ENCODE measurements at regions of chr18 and their contacts with region 1.

Region 1: GRCh38 chr18:63320046-63320689 is 599 bp upstream of the BCL2 start:
- DNase-seq: peak; percentile 92
- ATAC-seq: peak; percentile 77
- H3K4me3 Mint-ChIP-seq: peak overlapping the region; percentile 93
- H3K27ac Mint-ChIP-seq: peak overlapping the region; percentile 94
- H3K4me1 Mint-ChIP-seq: peaks cover 22% of the 10 kb centered on the region
- H3K27me3 Mint-ChIP-seq: no peaks in the 10 kb centered on the region
- CTCF ChIP-seq: no peak

Region 2: GRCh38 chr18:63119647-63120046 is 200.5 kb before region 1 on chr18:
- CTCF ChIA-PET with region 1: interaction called, 20 read pairs
- POLR2A ChIA-PET with region 1: no interaction called
- intact Hi-C with region 1: no loop called
- DNase-seq: peak; percentile 53
- ATAC-seq: peak; percentile 67
- H3K4me3 Mint-ChIP-seq: no peak overlapping the region
- H3K27ac Mint-ChIP-seq: no peak overlapping the region
- H3K4me1 Mint-ChIP-seq: peaks cover 5% of the 10 kb centered on the region
- H3K27me3 Mint-ChIP-seq: peaks cover 10% of the 10 kb centered on the region
- CTCF ChIP-seq: peak; percentile 23

Region 3: DNA sequence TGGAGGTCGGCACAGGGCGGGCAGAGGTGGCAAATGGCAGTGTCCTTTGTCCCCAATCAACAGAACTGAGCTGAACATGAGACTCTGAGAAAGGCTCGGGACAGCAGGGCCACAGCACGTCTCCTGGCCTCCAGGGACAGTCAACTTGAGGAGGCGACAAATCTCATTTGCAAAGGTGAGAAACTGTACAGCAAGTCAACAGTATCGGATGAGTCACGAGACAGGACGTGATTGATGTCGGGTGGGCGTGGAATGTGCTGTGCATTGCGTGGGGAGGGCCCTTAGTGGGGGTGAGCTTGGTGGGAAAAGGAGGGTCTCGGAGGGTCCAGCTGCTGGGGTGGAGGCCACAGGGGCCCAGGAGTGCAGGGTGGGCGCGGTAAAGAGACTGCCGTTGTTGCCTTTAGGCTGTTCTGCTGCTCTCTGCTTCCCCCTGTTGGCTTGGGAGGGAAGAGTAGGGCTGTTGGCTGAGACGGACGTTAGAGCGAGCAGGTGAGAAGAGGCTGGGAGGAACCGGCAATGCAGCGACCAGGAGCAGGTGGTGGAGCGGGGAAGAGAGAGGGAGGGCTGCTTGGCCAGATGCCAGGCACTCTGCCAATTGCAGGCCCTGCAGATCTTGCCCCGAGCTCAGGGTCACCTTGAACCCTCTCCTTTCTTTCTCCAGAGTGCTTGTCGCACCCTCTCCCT is 164.9 kb before region 1 on chr18:
- CTCF ChIA-PET with region 1: interaction called, 36 read pairs
- POLR2A ChIA-PET with region 1: interaction called, 68 read pairs
- intact Hi-C with region 1: loop called (anchors 2 kb)
- DNase-seq: peak; percentile 92
- ATAC-seq: peak; percentile 62
- H3K4me3 Mint-ChIP-seq: peak overlapping the region; percentile 85
- H3K27ac Mint-ChIP-seq: peak overlapping the region; percentile 99
- H3K4me1 Mint-ChIP-seq: peaks cover 97% of the 10 kb centered on the region
- H3K27me3 Mint-ChIP-seq: no peaks in the 10 kb centered on the region
- CTCF ChIP-seq: peak; percentile 91

Region 4: DNA sequence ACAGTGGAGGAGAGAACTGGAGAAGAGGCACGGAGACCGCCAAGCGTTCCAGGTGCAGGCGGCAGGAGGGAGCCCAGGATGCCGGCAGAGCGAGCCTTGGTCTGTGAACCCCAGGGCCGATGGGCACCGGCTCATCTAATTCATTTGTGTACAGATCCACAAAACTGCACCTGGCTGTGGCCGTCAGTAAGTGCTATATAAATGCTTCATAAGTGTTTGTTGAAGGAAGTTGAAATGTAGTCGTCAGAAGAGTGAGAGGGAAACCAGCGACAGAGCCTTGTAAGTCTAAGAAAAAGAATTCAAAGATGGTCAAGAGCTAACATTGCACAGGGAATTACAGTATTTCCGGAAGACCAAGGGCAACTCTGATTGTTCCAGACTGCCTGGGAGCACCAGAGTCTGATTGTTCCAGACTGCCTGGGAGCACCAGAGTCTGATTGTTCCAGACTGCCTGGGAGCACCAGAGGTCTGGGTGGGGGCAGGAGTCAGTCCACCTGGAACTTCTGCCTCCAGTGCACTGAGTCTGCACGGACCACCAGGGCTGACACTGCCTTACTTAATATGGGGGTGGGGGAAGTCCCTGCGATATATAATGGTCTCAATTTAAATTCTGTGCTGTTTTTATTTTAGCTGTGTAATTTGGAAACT is 112.9 kb before region 1 on chr18:
- CTCF ChIA-PET with region 1: interaction called, 71 read pairs
- POLR2A ChIA-PET with region 1: interaction called, 40 read pairs
- intact Hi-C with region 1: loop called (anchors 5 kb)
- DNase-seq: peak; percentile 75
- ATAC-seq: peak; percentile 62
- H3K4me3 Mint-ChIP-seq: peak overlapping the region; percentile 72
- H3K27ac Mint-ChIP-seq: peak overlapping the region; percentile 84
- H3K4me1 Mint-ChIP-seq: peaks cover 94% of the 10 kb centered on the region
- H3K27me3 Mint-ChIP-seq: no peaks in the 10 kb centered on the region
- CTCF ChIP-seq: no peak

Region 5: DNA sequence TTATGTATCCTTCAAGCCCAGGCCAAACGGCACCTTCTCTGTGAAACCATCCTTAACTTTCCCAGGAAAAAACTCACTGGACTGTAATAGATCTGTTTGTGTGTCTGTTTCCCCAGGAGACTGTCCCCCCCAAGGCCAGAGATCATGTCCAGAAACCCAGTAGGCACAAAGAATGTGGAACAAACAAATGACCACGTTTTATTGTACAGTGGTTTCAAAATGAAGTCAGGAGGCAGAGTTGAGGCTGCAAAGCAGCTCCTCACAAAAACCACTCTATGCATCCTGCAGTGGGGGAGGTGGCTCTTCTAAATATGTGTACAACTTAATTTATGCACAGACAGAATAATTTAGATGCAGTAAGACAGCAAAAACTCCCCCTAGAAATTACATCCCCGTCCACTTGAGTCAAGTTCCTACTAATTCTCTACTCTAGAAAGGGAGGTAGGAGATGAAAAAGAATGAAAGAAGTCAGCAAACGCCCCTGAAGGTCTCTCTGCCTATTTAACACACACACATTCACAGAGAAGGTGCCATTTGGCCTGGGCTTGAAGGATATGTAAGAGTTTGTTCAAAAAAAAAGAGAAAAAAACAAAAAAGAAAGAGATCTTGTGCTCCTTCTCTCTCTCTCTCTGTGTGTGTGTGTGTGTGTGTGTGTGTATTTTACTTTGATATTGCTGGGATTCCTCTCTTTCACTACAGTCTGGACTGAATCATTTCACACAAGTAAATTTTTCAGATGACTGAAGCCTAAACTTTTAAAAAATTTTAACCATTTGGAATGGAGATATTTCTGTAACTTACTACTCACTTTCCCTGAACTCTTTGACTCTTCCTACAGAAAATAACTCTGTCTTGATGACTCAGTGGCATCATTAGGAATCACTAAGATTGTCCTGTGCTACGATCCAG is 20.1 kb before region 1 on chr18:
- CTCF ChIA-PET with region 1: interaction called, 26 read pairs
- POLR2A ChIA-PET with region 1: interaction called, 23 read pairs
- intact Hi-C with region 1: loop called (anchors 2 kb)
- DNase-seq: peak; percentile 83
- ATAC-seq: peak; percentile 77
- H3K4me3 Mint-ChIP-seq: peak overlapping the region; percentile 32
- H3K27ac Mint-ChIP-seq: peak overlapping the region; percentile 89
- H3K4me1 Mint-ChIP-seq: peaks cover 81% of the 10 kb centered on the region
- H3K27me3 Mint-ChIP-seq: no peaks in the 10 kb centered on the region
- CTCF ChIP-seq: no peak

Region 6: DNA sequence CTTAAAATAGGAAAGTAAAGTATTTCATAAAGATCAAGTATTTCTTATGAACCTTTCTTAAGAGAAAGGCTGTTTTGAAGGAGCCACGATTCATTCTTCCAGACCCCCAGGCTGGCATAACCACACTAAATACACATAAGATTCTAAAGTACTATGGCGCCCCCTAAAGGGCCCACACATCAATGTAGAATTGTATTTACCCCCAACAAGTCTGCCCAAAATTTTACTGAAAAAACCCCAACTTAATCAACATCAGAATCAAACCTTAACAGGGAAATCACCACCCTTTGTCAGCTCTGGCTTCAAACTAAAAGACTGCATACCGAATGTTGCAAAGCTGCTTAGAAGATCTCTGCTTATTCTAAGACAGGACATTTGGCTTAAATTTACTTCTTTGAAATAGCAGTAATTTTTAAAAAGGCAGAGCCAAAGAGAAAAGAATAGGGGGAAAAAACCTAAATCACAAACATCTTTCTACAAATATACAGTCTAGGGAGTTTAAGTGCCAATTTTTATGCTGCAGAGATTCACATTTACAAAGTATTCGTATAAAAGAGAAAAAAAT is 19.8 kb after region 1 on chr18:
- CTCF ChIA-PET with region 1: interaction called, 81 read pairs
- POLR2A ChIA-PET with region 1: no interaction called
- intact Hi-C with region 1: no loop called
- DNase-seq: peak; percentile 75
- ATAC-seq: peak; percentile 66
- H3K4me3 Mint-ChIP-seq: no peak overlapping the region
- H3K27ac Mint-ChIP-seq: no peak overlapping the region
- H3K4me1 Mint-ChIP-seq: peaks cover 10% of the 10 kb centered on the region
- H3K27me3 Mint-ChIP-seq: no peaks in the 10 kb centered on the region
- CTCF ChIP-seq: peak; percentile 73

Region 7: GRCh38 chr18:63378919-63379638 is 58.9 kb after region 1 on chr18:
- CTCF ChIA-PET with region 1: no interaction called
- POLR2A ChIA-PET with region 1: no interaction called
- intact Hi-C with region 1: no loop called
- DNase-seq: no peak
- ATAC-seq: peak; percentile 72
- H3K4me3 Mint-ChIP-seq: peak overlapping the region; percentile 61
- H3K27ac Mint-ChIP-seq: peak overlapping the region; percentile 90
- H3K4me1 Mint-ChIP-seq: peaks cover 22% of the 10 kb centered on the region
- H3K27me3 Mint-ChIP-seq: peaks cover 1% of the 10 kb centered on the region
- CTCF ChIP-seq: no peak

Region 8: DNA sequence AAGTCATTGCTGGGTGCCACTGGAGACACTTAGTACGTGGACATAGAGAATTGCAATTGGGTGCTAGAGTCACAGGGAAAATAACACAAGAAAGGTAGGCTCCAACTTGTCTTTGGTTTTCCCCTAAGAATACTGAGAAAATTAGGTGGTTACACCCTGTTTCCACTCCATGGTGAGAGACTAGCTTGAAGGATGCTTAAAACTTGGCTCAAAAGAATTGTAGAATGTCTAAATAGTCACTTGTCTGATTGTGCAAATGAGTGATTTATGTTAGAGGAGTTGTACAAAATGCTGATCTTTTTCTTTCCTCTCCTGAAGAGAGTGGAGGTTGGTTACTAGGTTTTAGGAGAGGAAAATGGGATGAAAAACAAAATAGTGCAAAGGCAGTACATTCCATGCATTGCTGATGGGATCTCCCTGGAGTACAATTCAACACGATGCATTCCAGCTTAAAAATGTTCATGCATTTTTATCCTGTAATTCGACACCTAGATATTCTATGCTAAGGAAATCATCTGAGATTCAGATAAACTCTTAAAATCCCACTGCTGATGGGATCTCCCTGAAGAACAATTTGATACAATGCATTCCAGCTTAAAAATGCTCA is 219.8 kb after region 1 on chr18:
- CTCF ChIA-PET with region 1: no interaction called
- POLR2A ChIA-PET with region 1: no interaction called
- intact Hi-C with region 1: no loop called
- DNase-seq: no peak
- ATAC-seq: no peak
- H3K4me3 Mint-ChIP-seq: no peak overlapping the region
- H3K27ac Mint-ChIP-seq: no peak overlapping the region
- H3K4me1 Mint-ChIP-seq: no peaks in the 10 kb centered on the region
- H3K27me3 Mint-ChIP-seq: peaks cover 20% of the 10 kb centered on the region
- CTCF ChIP-seq: no peak

Region 9: DNA sequence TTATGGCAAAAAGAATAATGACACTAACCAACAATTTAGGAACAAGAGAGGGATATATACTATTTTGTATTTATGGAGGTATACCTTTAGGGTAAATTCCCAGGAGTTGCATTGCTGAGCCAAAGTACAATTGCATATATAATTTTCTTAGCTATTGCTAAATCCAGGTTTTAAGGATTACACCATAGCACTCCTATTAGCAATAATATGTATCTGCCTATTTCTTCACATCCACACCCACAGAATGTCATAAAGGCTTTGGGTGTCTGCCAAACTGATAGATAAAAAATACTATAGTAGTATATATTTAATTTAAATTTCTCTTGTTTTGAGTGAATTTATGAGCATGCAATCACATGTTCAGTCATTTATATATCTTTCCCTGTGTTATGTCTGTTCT is 255.5 kb after region 1 on chr18:
- CTCF ChIA-PET with region 1: no interaction called
- POLR2A ChIA-PET with region 1: no interaction called
- intact Hi-C with region 1: no loop called
- DNase-seq: no peak
- ATAC-seq: no peak
- H3K4me3 Mint-ChIP-seq: no peak overlapping the region
- H3K27ac Mint-ChIP-seq: no peak overlapping the region
- H3K4me1 Mint-ChIP-seq: no peaks in the 10 kb centered on the region
- H3K27me3 Mint-ChIP-seq: peaks cover 9% of the 10 kb centered on the region
- CTCF ChIP-seq: no peak